Activated CD4-positive, alpha-beta memory T cell treated with anti-CD3 and anti-CD28 coated beads, Interleukin-2, amount 10 ng/mL, durations not matched to agents 7 days and 5 days (primary cell): ENCODE measurements at regions of chr11 and their contacts with region 1.

Region 1: DNA sequence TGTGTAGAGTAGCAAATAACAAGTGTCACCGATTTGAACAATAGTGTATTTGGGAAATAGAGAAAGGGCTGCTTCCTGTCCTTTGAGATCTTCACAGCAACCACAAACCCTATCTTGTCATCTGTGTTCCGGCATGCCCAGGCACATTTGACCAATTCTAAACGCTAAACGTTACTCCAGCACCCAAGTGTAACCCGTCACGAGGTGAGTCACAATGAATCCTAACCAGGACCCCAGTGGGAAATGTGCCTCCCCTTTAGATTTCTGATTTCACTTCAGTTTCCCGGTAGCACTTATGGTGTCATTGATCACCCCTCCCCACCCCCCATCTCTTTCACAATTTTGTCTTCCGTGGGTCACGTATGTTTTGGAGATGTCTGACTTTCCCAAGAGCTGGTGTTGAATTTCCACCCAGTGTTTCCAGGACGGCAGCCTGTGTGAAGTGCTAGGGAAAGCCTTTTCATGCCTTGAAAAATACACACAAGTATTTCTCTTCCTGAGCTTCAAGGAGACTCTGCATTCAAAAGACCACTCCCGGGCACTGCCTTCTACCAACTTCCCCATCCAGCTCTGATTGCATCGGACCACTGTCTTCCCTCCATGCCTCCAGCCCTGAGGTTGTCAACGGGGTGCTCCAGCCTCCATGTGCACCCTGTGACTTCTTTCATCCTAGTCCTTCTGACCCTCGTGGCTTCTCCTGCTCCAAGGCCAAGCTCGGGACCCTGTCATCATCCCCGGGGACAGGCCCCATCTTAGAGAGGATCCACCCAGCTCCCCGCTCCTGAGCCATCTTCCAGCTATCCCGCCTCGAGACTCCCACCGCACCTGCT is 10.6 kb upstream of the C11orf24 start:
- DNase-seq: peak; percentile 64
- H3K4me3 Mint-ChIP-seq: peak overlapping the region; percentile 45
- H3K27ac Mint-ChIP-seq: peak overlapping the region; percentile 74
- H3K4me1 Mint-ChIP-seq: peaks cover 28% of the 10 kb centered on the region
- H3K27me3 Mint-ChIP-seq: peaks cover 18% of the 10 kb centered on the region

Region 2: GRCh38 chr11:68257475-68258362 is 24.6 kb before region 1 on chr11:
- CTCF ChIA-PET with region 1: no interaction called
- POLR2A ChIA-PET with region 1: no interaction called
- DNase-seq: peak; percentile 94
- H3K4me3 Mint-ChIP-seq: no peak overlapping the region
- H3K27ac Mint-ChIP-seq: no peak overlapping the region
- H3K4me1 Mint-ChIP-seq: peaks cover 5% of the 10 kb centered on the region
- H3K27me3 Mint-ChIP-seq: no peaks in the 10 kb centered on the region

Region 3: GRCh38 chr11:68271781-68272608 is 10.4 kb before region 1 on chr11 and contains the start of gene C11orf24:
- CTCF ChIA-PET with region 1: interaction called, 15 read pairs
- POLR2A ChIA-PET with region 1: interaction called, 30 read pairs
- DNase-seq: peak; percentile 94
- H3K4me3 Mint-ChIP-seq: peak within 1 kb of the TSS; percentile 98
- H3K27ac Mint-ChIP-seq: peak within 1 kb of the TSS; percentile 99
- H3K4me1 Mint-ChIP-seq: peaks cover 46% of the 10 kb centered on the region
- H3K27me3 Mint-ChIP-seq: no peaks in the 10 kb centered on the region
- total RNA-seq, gene C11orf24: 24.0 to 27.4 TPM